Adrenal gland (tissue), 19 donors: ENCODE measurements at regions of chr11 and their contacts with region 1.

Region 1: DNA sequence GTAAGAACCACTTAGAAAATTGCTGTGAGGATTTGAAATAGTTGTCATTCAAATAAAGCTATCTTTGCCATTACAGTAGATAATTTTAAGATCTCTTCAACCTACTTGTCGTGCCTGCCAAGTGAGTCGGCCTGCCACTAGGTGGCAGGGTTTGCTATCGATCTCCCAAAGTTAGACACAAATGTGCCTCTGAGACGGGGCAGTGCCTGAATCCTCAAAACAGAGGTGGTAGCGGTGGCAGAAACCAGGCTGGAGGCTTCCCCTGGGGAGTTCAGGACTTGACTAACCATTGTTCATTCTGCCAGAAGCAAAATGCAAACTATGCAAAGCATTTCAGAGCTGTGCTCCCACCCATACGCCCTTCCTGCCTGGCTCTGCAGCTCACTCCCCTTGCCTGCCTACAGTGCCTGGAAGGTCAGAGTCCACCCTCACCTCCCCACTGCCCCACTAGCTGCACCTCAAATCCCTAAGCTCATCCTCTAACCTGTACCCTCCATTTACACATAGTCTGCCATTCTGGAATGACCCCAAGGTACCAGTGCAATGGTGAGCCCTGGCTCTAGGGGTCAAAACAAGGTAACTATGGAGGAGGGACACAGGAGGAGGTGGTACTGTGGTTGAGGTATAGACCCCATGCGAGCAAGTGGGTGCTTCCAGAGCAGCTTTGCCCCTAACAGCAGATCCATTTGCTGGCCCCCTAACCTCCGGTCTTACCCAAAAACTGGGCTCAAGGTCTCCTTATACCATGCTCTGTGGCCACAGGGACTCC is 82.1 kb downstream of the C11orf58 start:
- DNase-seq: peak; percentile 72 to 92 (median 84)
- H3K4me3 ChIP-seq: no peak overlapping the region
- H3K27ac ChIP-seq: no peak overlapping the region
- H3K4me1 ChIP-seq: no peaks in the 10 kb centered on the region
- H3K27me3 ChIP-seq: no peaks in the 10 kb centered on the region
- CTCF ChIP-seq: peak; percentile 73 to 87 (median 78)
- POLR2A ChIP-seq: no peak

Region 2: GRCh38 chr11:16785520-16786128 is 34.9 kb before region 1 on chr11:
- intact Hi-C with region 1: no loop called
- DNase-seq: peak; percentile 69 to 89 (median 80)
- H3K4me3 ChIP-seq: no peak overlapping the region
- H3K27ac ChIP-seq: no peak overlapping the region
- H3K4me1 ChIP-seq: peaks cover 0 to 7% of the 10 kb centered on the region in 2 donors
- H3K27me3 ChIP-seq: no peaks in the 10 kb centered on the region
- CTCF ChIP-seq: peak; percentile 79 to 86 (median 82)
- POLR2A ChIP-seq: no peak

Region 3: DNA sequence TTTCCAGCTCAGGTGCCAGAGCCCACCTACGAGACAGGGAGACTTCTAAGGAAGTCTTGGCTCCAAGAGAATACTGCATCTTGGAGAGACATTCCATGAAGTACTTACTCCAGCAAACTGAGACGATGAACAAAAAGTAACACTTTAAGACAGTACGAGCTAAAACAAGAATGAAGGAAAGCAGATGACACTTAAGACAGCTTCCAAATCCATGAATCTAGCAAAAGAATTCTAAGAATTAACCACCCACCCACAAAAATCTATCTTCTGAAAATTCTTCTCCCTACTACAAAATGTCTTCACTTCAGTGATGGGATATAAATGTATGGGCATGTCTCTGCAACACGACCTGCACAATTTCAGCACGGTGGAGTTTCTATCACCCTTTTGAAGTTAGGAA is 50.9 kb after region 1 on chr11:
- intact Hi-C with region 1: loop called (anchors 5 to 10 kb)
- DNase-seq: no peak
- H3K4me3 ChIP-seq: no peak overlapping the region
- H3K27ac ChIP-seq: no peak overlapping the region
- H3K4me1 ChIP-seq: no peaks in the 10 kb centered on the region
- H3K27me3 ChIP-seq: no peaks in the 10 kb centered on the region
- CTCF ChIP-seq: no peak
- POLR2A ChIP-seq: no peak